ENCODE measurements at regions of chr14 and their contacts with region 1.

Region 1: GRCh38 chr14:23727566-23728335 is 91.6 kb downstream of the DHRS2 start:
- DNase-seq: peak in 2 of 4 donors; percentile 30 to 38
- ATAC-seq: peak; percentile 80
- H3K4me3 ChIP-seq: no peak overlapping the region
- H3K27ac ChIP-seq: no peak overlapping the region
- H3K4me1 ChIP-seq: no peaks in the 10 kb centered on the region
- H3K27me3 ChIP-seq: no peaks in the 10 kb centered on the region
- CTCF ChIP-seq: peak in 6 of 7 experiments; percentile 30 to 63 (median 54)
- POLR2A ChIP-seq: no peak

Region 2: GRCh38 chr14:23903442-23903841 is 175.7 kb after region 1 on chr14:
- intact Hi-C with region 1: loop called (anchors 10 kb)
- DNase-seq: no peak
- ATAC-seq: no peak
- H3K4me3 ChIP-seq: no peak overlapping the region
- H3K27ac ChIP-seq: no peak overlapping the region
- H3K4me1 ChIP-seq: no peaks in the 10 kb centered on the region
- H3K27me3 ChIP-seq: no peaks in the 10 kb centered on the region
- CTCF ChIP-seq: no peak
- POLR2A ChIP-seq: no peak

Measured in body of pancreas (tissue), 4 donors.